ENCODE measurements at regions of chr6 and their contacts with region 1.

Region 1: GRCh38 chr6:31197559-31198305 is 27.2 kb upstream of the POU5F1 start:
- DNase-seq: peak; percentile 88 to 98 (median 93)
- ATAC-seq: peak; percentile 80
- H3K4me3 ChIP-seq: peak overlapping the region; percentile 79 to 80
- H3K4me3 Mint-ChIP-seq: peak overlapping the region; percentile 83
- H3K27ac ChIP-seq: peak overlapping the region; percentile 97 to 98
- H3K27ac Mint-ChIP-seq: peak overlapping the region; percentile 100
- H3K4me1 ChIP-seq: peaks cover 43% of the 10 kb centered on the region
- H3K4me1 Mint-ChIP-seq: peaks cover 62% of the 10 kb centered on the region
- H3K27me3 ChIP-seq: no peaks in the 10 kb centered on the region
- H3K27me3 Mint-ChIP-seq: no peaks in the 10 kb centered on the region
- CTCF ChIP-seq: no peak

Region 2: DNA sequence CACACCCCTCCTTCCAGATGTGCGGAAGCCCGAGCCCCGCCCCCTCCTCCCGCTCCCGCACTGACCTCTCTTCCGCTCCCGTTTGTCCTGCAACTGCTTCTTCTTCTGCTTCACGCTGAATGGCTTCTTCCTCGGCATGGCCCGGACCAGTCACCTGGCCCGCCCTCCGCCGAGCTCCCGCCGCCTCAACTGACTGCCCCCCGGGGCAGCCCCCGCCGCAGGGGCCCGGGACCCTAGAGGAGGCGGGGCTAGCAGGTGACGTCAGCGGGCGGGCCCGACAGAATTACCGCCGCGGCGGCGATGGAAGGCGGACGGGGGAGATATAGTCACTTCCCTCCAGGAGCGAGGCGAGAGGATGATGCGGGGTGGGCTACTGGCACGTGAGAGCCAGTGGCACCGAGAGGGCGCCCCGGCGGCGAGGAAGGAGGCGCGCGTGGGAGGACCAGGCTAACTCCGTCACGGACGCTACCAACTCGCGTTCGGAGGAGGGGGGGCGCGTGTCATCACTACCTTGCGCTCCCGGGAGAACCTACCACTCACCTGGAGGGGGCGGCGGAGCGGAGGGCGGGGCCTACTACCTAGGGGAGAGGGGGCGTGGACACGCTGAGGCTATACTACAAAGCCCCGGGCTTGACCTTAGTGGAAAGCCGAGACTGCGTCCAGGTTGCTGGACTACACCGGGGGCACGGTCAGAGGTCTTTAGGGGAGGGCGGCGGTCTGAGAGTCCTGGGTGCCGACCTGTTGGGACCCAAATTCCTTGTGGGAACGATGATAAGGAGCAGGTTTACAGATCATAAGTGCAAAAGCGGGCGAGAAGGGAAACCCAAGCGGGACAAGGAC is 641.4 kb before region 1 on chr6 and contains the start of gene GNL1:
- CTCF ChIA-PET with region 1: no interaction called
- POLR2A ChIA-PET with region 1: no interaction called
- intact Hi-C with region 1: loop called in 1 of 2 experiments (anchors 5 kb)
- DNase-seq: peak; percentile 97 to 100 (median 99)
- ATAC-seq: peak; percentile 90
- H3K4me3 ChIP-seq: peak within 1 kb of the TSS; percentile 75 to 92
- H3K4me3 Mint-ChIP-seq: peak within 1 kb of the TSS; percentile 95
- H3K27ac ChIP-seq: peak within 1 kb of the TSS; percentile 98 to 99
- H3K27ac Mint-ChIP-seq: peak within 1 kb of the TSS; percentile 99
- H3K4me1 ChIP-seq: peaks cover 25% of the 10 kb centered on the region
- H3K4me1 Mint-ChIP-seq: peaks cover 42% of the 10 kb centered on the region
- H3K27me3 ChIP-seq: no peaks in the 10 kb centered on the region
- H3K27me3 Mint-ChIP-seq: no peaks in the 10 kb centered on the region
- CTCF ChIP-seq: no peak
- total RNA-seq, gene GNL1: 148 to 159 TPM

Region 3: GRCh38 chr6:31158140-31158862 is 39.4 kb before region 1 on chr6 and contains the start of gene TCF19:
- CTCF ChIA-PET with region 1: interaction called, 3 read pairs
- POLR2A ChIA-PET with region 1: interaction called, 8 read pairs
- intact Hi-C with region 1: loop called (anchors 1 to 5 kb)
- DNase-seq: peak; percentile 98 to 100 (median 99)
- ATAC-seq: peak; percentile 89
- H3K4me3 ChIP-seq: peak within 1 kb of the TSS; percentile 52 to 89
- H3K4me3 Mint-ChIP-seq: peak within 1 kb of the TSS; percentile 86
- H3K27ac ChIP-seq: peak within 1 kb of the TSS; percentile 40 to 82
- H3K27ac Mint-ChIP-seq: peak within 1 kb of the TSS; percentile 85
- H3K4me1 ChIP-seq: peaks cover 12% of the 10 kb centered on the region
- H3K4me1 Mint-ChIP-seq: peaks cover 24% of the 10 kb centered on the region
- H3K27me3 ChIP-seq: no peaks in the 10 kb centered on the region
- H3K27me3 Mint-ChIP-seq: no peaks in the 10 kb centered on the region
- CTCF ChIP-seq: no peak
- total RNA-seq, gene TCF19: 2.6 to 2.9 TPM

Region 4: DNA sequence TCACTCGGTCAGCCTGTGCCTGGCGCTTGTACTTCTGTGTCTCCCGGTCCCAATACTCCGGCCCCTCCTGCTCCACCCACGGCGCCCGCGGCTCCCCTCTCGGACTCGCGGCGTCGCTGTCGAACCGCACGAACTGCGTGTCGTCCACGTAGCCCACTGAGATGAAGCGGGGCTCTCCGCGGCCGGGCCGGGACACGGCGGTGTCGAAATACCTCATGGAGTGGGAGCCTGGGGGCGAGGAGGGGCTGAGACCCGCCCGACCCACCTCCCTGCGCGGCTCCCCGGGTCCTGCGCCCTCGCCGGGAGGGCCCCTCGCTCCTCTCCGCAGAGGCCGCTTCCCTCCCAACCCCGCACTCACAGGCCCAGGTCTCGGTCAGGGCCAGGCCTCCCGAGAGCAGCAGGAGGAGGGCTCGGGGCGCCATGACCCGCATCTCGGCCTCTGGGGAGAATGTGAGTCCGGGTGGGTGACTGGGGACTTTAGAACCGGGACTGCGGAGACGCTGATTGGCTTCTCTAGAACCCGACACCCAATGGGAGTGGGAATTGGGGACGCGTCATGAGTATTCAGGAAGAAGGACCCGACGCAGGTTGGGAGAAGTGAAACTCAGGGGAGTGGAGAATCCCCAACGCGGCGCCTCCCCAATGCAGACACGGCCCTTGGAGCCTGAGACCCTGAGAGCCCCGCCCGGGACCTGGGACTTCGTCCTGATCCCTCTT is 74.1 kb after region 1 on chr6 and contains the start of gene HLA-C:
- CTCF ChIA-PET with region 1: interaction called, 8 read pairs
- POLR2A ChIA-PET with region 1: interaction called, 26 read pairs
- intact Hi-C with region 1: loop called (anchors 1 kb)
- DNase-seq: peak; percentile 79 to 98 (median 92)
- ATAC-seq: peak; percentile 85
- H3K4me3 ChIP-seq: peak within 1 kb of the TSS; percentile 82 to 86
- H3K4me3 Mint-ChIP-seq: peak within 1 kb of the TSS; percentile 95
- H3K27ac ChIP-seq: peak within 1 kb of the TSS; percentile 93 to 98
- H3K27ac Mint-ChIP-seq: peak within 1 kb of the TSS; percentile 100
- H3K4me1 ChIP-seq: peaks cover 43% of the 10 kb centered on the region
- H3K4me1 Mint-ChIP-seq: peaks cover 56% of the 10 kb centered on the region
- H3K27me3 ChIP-seq: no peaks in the 10 kb centered on the region
- H3K27me3 Mint-ChIP-seq: no peaks in the 10 kb centered on the region
- CTCF ChIP-seq: no peak
- total RNA-seq, gene HLA-C: 2,677 to 2,722 TPM

Region 5: DNA sequence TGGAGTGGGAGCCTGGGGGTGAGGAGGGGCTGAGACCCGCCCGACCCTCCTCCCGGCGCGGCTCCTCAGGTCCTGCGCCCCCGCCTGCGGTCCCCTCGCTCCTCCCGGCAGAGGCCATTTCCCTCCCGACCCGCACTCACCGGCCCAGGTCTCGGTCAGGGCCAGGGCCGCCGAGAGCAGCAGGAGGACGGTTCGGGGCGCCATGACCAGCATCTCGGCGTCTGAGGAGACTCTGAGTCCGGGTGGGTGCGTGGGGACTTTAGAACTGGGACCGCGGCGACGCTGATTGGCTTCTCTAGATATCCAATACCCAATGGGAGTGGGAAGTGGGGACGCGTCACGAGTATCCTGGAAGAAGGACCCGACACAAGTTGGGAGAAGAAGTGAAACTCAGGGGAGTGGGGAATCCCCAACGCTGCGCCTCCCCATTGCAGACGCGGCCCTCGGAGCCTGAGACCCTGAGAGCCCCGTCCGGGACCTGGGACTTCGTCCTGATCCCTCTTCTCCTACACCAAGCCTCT is 159.3 kb after region 1 on chr6 and contains the start of gene HLA-B:
- CTCF ChIA-PET with region 1: interaction called, 4 read pairs
- POLR2A ChIA-PET with region 1: interaction called, 35 read pairs
- intact Hi-C with region 1: loop called (anchors 1 kb)
- DNase-seq: peak; percentile 65 to 98 (median 79)
- ATAC-seq: peak; percentile 80
- H3K4me3 ChIP-seq: peak within 1 kb of the TSS; percentile 55 to 92
- H3K4me3 Mint-ChIP-seq: peak within 1 kb of the TSS; percentile 100
- H3K27ac ChIP-seq: peak within 1 kb of the TSS; percentile 97 to 99
- H3K27ac Mint-ChIP-seq: peak within 1 kb of the TSS; percentile 100
- H3K4me1 ChIP-seq: peaks cover 48% of the 10 kb centered on the region
- H3K4me1 Mint-ChIP-seq: peaks cover 59% of the 10 kb centered on the region
- H3K27me3 ChIP-seq: no peaks in the 10 kb centered on the region
- H3K27me3 Mint-ChIP-seq: no peaks in the 10 kb centered on the region
- CTCF ChIP-seq: no peak
- total RNA-seq, gene HLA-B: 9,693 to 10,002 TPM

Region 6: DNA sequence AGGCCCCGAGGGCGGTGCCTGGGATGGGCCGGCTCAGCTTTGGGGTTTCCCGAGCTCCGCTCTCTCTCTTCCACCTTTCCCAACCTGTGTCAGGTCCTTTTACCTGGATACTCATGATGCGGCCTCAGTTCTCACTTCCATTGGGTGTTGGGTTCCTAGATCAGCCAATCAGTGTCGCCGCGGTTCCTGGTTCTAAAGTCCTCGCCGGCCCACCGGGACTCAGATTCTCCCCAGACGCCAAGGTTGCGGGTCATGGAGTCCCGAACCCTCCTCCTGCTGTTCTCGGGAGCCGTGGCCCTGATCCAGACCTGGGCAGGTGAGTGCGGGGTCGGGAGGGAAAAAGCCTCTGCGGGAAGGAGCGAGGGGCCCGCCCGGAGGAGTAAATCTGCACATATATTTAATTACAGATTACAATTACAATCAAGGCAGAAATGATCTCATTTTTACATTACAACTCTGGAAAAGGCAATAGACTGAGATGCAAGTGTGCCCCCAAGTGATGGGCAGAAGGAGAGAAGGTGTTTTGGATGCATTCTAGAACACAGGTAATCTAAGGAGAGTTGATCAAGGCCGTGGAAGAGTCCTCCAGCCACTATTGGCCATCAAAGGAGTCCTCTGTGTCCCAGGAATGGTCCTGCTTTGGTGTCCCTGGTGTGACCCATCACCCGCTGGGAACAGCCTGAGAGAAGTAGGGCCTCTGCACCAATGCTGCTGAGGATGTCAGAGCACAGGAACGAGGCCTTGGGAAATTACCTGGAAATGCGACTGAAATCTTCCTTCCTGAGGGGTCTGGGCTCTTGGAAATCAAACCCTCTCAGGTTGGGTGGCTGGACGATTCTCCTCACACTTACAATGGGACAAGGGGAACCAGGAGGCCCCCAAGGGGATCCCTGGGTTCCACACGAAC is 265.5 kb after region 1 on chr6:
- CTCF ChIA-PET with region 1: no interaction called
- POLR2A ChIA-PET with region 1: interaction called, 4 read pairs
- intact Hi-C with region 1: loop called (anchors 2 kb)
- DNase-seq: peak; percentile 81 to 98 (median 90)
- ATAC-seq: peak; percentile 93
- H3K4me3 ChIP-seq: peak overlapping the region; percentile 80 to 82
- H3K4me3 Mint-ChIP-seq: peak overlapping the region; percentile 100
- H3K27ac ChIP-seq: peak overlapping the region; percentile 89 to 98
- H3K27ac Mint-ChIP-seq: peak overlapping the region; percentile 98
- H3K4me1 ChIP-seq: peaks cover 48% of the 10 kb centered on the region
- H3K4me1 Mint-ChIP-seq: peaks cover 67% of the 10 kb centered on the region
- H3K27me3 ChIP-seq: no peaks in the 10 kb centered on the region
- H3K27me3 Mint-ChIP-seq: no peaks in the 10 kb centered on the region
- CTCF ChIP-seq: no peak